ENCODE measurements at regions of chr12 and their contacts with region 1.

Region 1: DNA sequence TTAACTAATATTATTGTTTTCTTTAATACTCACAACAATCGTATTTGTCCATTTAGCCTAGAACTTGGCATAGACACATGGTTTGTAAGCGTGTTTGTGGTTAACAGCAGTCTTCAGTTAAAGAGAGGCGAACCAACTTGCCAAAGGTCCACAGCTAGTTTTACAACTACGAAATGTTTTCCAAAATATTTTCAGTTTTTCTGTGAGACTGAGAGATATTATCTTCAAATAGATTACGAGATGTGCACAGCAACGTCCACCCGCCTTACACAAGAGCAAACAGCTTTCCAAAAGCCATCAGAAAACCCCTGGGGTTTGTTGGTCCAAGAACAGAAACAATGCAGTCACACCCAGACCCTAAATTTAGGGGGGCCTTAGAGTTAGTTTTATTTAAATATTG is 58.6 kb upstream of the RASSF3 start:
- DNase-seq: no peak
- H3K4me3 ChIP-seq: no peak overlapping the region
- H3K27ac ChIP-seq: no peak overlapping the region
- H3K4me1 ChIP-seq: no peaks in the 10 kb centered on the region
- H3K27me3 ChIP-seq: peaks cover 0 to 2% of the 10 kb centered on the region in 2 experiments
- CTCF ChIP-seq: no peak
- POLR2A ChIP-seq: no peak

Region 2: DNA sequence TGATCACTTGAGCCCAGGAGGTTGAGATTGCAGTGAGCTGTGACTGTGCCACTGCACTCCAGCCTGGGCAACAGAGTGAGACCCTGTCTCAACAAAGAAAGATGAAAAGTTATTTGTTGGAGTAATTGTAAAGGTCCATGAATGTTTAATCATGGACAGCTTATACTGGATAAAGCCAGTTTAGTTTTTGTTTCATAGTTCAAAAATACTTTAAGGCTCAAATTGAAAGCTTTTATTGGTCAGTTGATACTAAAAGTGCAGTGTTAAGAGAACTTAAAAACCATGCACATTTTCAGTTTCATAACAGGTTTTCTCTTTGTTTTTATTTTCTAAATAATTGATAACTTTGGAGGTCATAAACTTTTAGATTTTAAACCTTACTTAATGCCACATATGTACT is 1976.7 kb before region 1 on chr12:
- CTCF ChIA-PET with region 1: no interaction called
- POLR2A ChIA-PET with region 1: no interaction called
- dilution Hi-C with region 1: no loop called
- intact Hi-C with region 1: no loop called
- DNase-seq: no peak
- H3K4me3 ChIP-seq: no peak overlapping the region
- H3K27ac ChIP-seq: no peak overlapping the region
- H3K4me1 ChIP-seq: no peaks in the 10 kb centered on the region
- H3K27me3 ChIP-seq: no peaks in the 10 kb centered on the region
- CTCF ChIP-seq: no peak
- POLR2A ChIP-seq: no peak

Region 3: DNA sequence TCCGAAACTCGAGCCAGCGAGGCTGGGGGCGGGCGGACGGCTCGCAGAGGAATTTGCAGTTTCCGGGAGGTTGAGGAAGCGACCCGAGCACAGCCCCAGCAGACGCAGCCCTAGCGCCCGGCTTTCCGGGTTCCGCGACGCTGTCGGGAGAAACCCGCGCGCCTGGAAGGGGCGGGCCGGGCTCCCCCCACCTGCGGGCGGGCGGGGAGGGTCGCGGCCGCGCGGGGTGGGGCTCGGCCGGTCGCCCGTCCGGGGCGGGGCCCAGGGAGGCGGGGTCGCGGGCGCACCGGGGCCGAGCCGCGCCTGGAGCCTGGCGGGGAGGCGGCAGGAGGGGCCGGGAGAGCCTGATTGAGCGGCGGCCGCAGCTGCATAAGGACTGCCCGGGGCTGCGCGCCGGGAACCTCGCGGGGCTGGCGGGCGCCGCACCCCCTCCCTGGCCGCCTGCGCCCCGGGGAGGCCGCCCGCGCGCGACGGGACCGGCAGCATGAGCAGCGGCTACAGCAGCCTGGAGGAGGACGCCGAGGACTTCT is 58.5 kb after region 1 on chr12 and contains the start of gene RASSF3:
- CTCF ChIA-PET with region 1: interaction called, 68 read pairs
- POLR2A ChIA-PET with region 1: no interaction called
- dilution Hi-C with region 1: no loop called
- intact Hi-C with region 1: loop called (anchors 1 kb)
- DNase-seq: peak; percentile 79
- H3K4me3 ChIP-seq: peak within 1 kb of the TSS; percentile 85 to 92 (median 90)
- H3K27ac ChIP-seq: peak within 1 kb of the TSS; percentile 78
- H3K4me1 ChIP-seq: peaks cover 23% of the 10 kb centered on the region
- H3K27me3 ChIP-seq: no peaks in the 10 kb centered on the region
- CTCF ChIP-seq: no peak
- POLR2A ChIP-seq: peak; percentile 63
- total RNA-seq, gene RASSF3: 60.0 and 60.8 TPM in 2 replicates

Region 4: DNA sequence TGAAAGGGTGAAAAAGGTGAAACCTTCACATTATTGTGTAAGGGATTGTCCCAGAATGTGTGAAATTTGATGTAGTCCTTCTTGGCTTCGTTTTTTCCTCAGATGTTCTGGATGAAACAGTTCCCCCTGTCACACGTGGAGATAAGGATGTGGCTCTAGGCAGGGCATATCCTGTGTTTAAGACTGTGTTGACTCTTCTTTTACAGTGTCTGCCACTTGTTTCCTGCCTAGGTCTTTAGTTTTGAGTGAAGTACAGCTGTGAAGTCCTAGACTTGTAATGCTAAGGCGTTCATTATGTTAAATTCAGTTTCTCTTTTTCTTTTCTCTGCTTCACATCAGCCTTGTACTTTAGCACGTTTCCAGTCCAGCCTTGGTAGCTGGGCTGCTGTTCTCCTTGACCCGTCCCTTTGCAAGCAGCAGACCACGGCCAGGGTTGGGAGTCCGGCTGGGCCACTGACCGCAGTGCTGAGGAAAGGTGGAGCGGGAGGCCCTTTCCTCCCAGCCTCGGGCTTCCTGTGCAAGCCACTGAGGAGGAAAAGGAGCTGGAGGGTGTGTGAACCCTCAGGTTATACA is 117.7 kb after region 1 on chr12:
- CTCF ChIA-PET with region 1: interaction called, 12 read pairs
- POLR2A ChIA-PET with region 1: no interaction called
- dilution Hi-C with region 1: no loop called
- intact Hi-C with region 1: no loop called
- DNase-seq: peak; percentile 81
- H3K4me3 ChIP-seq: peak overlapping the region in 2 of 3 experiments; percentile 2 to 7
- H3K27ac ChIP-seq: peak overlapping the region; percentile 17
- H3K4me1 ChIP-seq: peaks cover 78% of the 10 kb centered on the region
- H3K27me3 ChIP-seq: no peaks in the 10 kb centered on the region
- CTCF ChIP-seq: no peak
- POLR2A ChIP-seq: no peak

Region 5: DNA sequence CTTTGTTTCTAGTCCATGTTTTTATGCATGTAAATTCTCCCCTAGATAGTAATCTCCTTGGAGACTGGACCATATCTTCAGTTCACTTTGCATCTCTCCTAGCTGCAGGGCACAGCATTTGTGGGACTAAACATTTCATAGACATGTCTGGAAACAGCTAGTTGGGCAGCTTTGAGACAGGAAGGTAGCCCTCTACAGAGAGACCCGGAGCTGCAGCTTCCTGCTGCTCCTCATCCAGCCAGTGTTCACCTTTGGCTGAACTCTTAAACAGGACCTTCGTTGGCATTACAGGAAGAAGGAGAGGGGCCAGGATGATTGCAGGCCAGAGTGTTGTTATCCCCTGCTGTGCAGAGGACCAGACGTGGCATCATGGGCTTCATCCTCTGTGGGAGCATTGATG is 154.6 kb after region 1 on chr12:
- CTCF ChIA-PET with region 1: interaction called, 21 read pairs
- POLR2A ChIA-PET with region 1: interaction called, 4 read pairs
- dilution Hi-C with region 1: no loop called
- intact Hi-C with region 1: no loop called
- DNase-seq: peak; percentile 40
- H3K4me3 ChIP-seq: no peak overlapping the region
- H3K27ac ChIP-seq: no peak overlapping the region
- H3K4me1 ChIP-seq: peaks cover 8% of the 10 kb centered on the region
- H3K27me3 ChIP-seq: no peaks in the 10 kb centered on the region
- CTCF ChIP-seq: no peak
- POLR2A ChIP-seq: no peak

Region 6: DNA sequence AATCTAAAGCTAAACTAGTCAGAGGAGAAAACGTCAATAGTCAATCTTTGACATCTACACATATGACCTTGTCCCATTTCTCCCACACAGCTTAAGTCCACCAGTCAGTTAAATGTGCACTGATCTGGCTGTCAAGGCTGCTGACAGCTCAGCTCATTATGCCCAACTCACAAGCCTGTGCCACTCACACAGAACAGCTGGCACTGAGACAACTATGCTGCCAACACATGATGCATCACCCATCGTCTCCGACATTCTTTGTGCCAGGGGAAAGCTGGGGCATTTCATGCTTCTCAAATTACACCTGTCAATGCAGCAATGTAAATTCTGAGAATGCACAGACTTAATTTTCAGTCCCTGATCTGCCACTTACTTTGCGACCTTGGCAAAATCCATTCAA is 182.2 kb after region 1 on chr12:
- CTCF ChIA-PET with region 1: no interaction called
- POLR2A ChIA-PET with region 1: no interaction called
- dilution Hi-C with region 1: no loop called
- intact Hi-C with region 1: no loop called
- DNase-seq: peak; percentile 37
- H3K4me3 ChIP-seq: no peak overlapping the region
- H3K27ac ChIP-seq: no peak overlapping the region
- H3K4me1 ChIP-seq: peaks cover 22% of the 10 kb centered on the region
- H3K27me3 ChIP-seq: no peaks in the 10 kb centered on the region
- CTCF ChIP-seq: no peak
- POLR2A ChIP-seq: no peak

Region 7: GRCh38 chr12:64801381-64801780 is 249.7 kb after region 1 on chr12:
- CTCF ChIA-PET with region 1: interaction called, 16 read pairs
- POLR2A ChIA-PET with region 1: no interaction called
- dilution Hi-C with region 1: no loop called
- intact Hi-C with region 1: no loop called
- DNase-seq: peak; percentile 33
- H3K4me3 ChIP-seq: no peak overlapping the region
- H3K27ac ChIP-seq: no peak overlapping the region
- H3K4me1 ChIP-seq: no peaks in the 10 kb centered on the region
- H3K27me3 ChIP-seq: no peaks in the 10 kb centered on the region
- CTCF ChIP-seq: peak; percentile 17 to 33
- POLR2A ChIP-seq: no peak

Measured in endothelial cell of umbilical vein (primary cell).